Caco-2 (cell line): ENCODE measurements at regions of chr7 and their contacts with region 1.

Region 1: DNA sequence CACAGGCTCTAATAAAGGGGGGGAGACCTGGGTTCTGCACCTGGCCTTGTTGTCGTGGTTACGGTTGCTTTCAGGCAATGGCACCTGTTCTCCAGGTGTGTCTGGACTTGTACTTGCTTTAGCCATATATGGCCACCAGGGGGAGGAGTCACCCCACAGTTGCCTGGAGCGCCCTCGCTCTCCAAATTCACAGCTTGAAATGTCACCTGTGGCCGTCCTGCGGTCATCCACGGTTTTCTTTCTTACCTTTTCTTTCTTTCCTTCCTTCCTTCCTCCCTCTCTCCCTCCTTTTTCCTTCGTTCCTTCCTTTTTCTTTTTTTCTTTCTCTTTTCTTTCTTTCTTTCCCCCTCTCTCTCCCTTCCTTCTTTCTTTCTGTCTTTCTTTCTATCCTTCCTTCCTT is 157.2 kb upstream of the ZNF92 start:
- DNase-seq: peak; percentile 81 to 84
- H3K4me3 ChIP-seq: no peak overlapping the region
- H3K4me3 Mint-ChIP-seq: peak overlapping the region; percentile 29
- H3K27ac Mint-ChIP-seq: no peak overlapping the region
- H3K4me1 ChIP-seq: no peaks in the 10 kb centered on the region
- H3K4me1 Mint-ChIP-seq: no peaks in the 10 kb centered on the region
- H3K27me3 ChIP-seq: no peaks in the 10 kb centered on the region
- H3K27me3 Mint-ChIP-seq: no peaks in the 10 kb centered on the region
- CTCF ChIP-seq: peak; percentile 80 to 83

Region 2: DNA sequence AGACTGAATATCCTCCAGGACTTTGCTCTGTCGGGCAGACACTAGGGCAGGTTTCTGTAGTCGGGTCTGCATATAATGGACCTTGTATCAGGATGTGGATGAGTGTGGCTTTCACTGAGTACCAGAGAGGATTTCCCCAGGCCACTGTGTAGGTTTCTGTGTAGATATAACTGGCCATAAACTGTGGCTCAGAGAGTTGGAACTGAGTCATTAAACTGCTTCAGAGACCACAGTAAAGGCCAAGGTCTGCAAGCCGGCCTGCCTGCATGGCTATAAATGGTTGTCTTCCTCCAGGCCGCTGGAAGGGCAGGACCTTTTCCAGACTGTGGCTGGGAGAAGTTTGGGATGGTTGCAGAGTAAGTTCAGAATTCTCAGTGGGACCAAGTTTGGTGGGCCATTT is 174.1 kb after region 1 on chr7:
- CTCF ChIA-PET with region 1: no interaction called
- POLR2A ChIA-PET with region 1: no interaction called
- intact Hi-C with region 1: loop called (anchors 10 kb)
- DNase-seq: no peak
- H3K4me3 ChIP-seq: no peak overlapping the region
- H3K4me3 Mint-ChIP-seq: no peak overlapping the region
- H3K27ac Mint-ChIP-seq: no peak overlapping the region
- H3K4me1 ChIP-seq: no peaks in the 10 kb centered on the region
- H3K4me1 Mint-ChIP-seq: no peaks in the 10 kb centered on the region
- H3K27me3 ChIP-seq: no peaks in the 10 kb centered on the region
- H3K27me3 Mint-ChIP-seq: no peaks in the 10 kb centered on the region
- CTCF ChIP-seq: no peak